Activated naive CD4-positive, alpha-beta T cell treated with anti-CD3 and anti-CD28 coated beads for 36 hours (primary cell): ENCODE measurements at regions of chr6 and their contacts with region 1.

Region 1: GRCh38 chr6:87393022-87393622 is 14.7 kb upstream of the CFAP206 start:
- DNase-seq: peak; percentile 56
- H3K4me3 Mint-ChIP-seq: no peak overlapping the region
- H3K27ac Mint-ChIP-seq: no peak overlapping the region
- H3K4me1 Mint-ChIP-seq: no peaks in the 10 kb centered on the region
- H3K27me3 Mint-ChIP-seq: peaks cover 2% of the 10 kb centered on the region

Region 2: GRCh38 chr6:87139236-87139635 is 253.9 kb before region 1 on chr6:
- CTCF ChIA-PET with region 1: interaction called, 12 read pairs
- intact Hi-C with region 1: loop called (anchors 1 kb)
- DNase-seq: peak; percentile 60
- H3K4me3 Mint-ChIP-seq: no peak overlapping the region
- H3K27ac Mint-ChIP-seq: no peak overlapping the region
- H3K4me1 Mint-ChIP-seq: peaks cover 2% of the 10 kb centered on the region
- H3K27me3 Mint-ChIP-seq: peaks cover 7% of the 10 kb centered on the region

Region 3: DNA sequence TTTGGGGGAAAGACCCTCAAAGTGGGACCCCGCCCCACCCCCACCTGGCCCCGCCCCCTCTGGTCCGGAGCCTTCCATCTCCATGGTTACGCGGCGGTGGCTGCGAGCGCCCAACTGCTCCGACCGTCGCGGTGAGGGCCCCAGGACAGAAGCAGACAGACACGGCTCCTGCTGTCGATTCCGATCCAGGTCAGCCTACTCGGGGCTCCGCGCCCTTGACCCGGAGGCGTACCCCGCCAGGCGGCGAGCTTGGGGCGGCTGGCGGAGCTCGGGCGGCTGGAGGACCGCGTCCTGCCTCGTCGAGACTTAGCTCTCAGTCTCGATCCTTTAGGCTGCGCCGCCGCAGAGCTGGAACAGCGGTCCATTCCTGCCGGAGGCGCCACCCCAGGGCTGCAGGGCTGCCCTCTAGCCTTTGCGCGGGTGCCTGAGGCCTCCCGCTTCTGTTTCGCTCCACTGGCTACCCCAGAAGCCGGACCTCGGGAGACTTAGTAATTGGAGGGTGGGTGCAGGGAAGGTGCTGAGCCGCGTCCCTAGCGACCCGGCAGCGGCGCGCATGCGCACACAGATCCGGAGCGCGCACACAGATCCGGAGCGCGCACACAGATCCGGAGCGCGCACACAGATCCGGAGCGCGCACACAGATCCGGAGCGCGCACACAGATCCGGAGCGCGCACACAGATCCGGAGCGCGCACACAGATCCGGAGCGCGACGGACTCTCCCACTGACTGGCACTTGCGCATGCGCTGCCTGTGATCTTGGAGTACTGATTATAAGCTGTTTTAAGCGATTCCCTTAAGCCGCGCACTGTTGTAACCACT is 15.0 kb after region 1 on chr6 and contains the start of gene CFAP206:
- CTCF ChIA-PET with region 1: interaction called, 12 read pairs
- intact Hi-C with region 1: no loop called
- DNase-seq: peak; percentile 81
- H3K4me3 Mint-ChIP-seq: peak within 1 kb of the TSS; percentile 84
- H3K27ac Mint-ChIP-seq: no peak within 1 kb of the TSS
- H3K4me1 Mint-ChIP-seq: no peaks in the 10 kb centered on the region
- H3K27me3 Mint-ChIP-seq: peaks cover 11% of the 10 kb centered on the region
- total RNA-seq, gene CFAP206: not detected

Region 4: GRCh38 chr6:87514831-87515230 is 121.7 kb after region 1 on chr6:
- CTCF ChIA-PET with region 1: no interaction called
- intact Hi-C with region 1: no loop called
- DNase-seq: no peak
- H3K4me3 Mint-ChIP-seq: no peak overlapping the region
- H3K27ac Mint-ChIP-seq: peak overlapping the region; percentile 46
- H3K4me1 Mint-ChIP-seq: peaks cover 6% of the 10 kb centered on the region
- H3K27me3 Mint-ChIP-seq: no peaks in the 10 kb centered on the region

Region 5: GRCh38 chr6:87799651-87800050 is 406.5 kb after region 1 on chr6:
- CTCF ChIA-PET with region 1: no interaction called
- intact Hi-C with region 1: loop called (anchors 10 kb)
- DNase-seq: no peak
- H3K4me3 Mint-ChIP-seq: no peak overlapping the region
- H3K27ac Mint-ChIP-seq: no peak overlapping the region
- H3K4me1 Mint-ChIP-seq: peaks cover 3% of the 10 kb centered on the region
- H3K27me3 Mint-ChIP-seq: peaks cover 7% of the 10 kb centered on the region

Region 6: GRCh38 chr6:87929843-87930288 is 536.7 kb after region 1 on chr6:
- CTCF ChIA-PET with region 1: no interaction called
- intact Hi-C with region 1: loop called (anchors 2 kb)
- DNase-seq: peak; percentile 76
- H3K4me3 Mint-ChIP-seq: no peak overlapping the region
- H3K27ac Mint-ChIP-seq: no peak overlapping the region
- H3K4me1 Mint-ChIP-seq: no peaks in the 10 kb centered on the region
- H3K27me3 Mint-ChIP-seq: no peaks in the 10 kb centered on the region

Region 7: DNA sequence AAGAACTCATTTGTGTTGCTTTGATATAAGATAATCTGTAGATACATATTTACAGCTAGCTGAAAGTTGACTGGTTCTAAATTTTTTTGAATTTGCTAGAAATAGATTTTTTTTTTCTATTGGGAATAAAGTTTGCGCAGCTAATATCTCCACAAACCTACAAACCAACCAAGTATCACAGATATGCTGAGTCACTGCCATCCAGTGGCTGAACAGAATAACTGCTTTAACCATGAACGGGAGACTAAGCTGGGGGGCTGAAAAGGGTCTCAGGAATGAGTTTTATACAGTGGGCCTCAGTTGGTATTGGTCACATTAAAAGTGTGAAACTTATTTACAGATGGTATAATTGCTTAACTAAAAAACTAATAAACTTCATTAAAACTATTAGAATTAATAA is 1099.7 kb after region 1 on chr6:
- CTCF ChIA-PET with region 1: no interaction called
- intact Hi-C with region 1: loop called (anchors 5 kb)
- DNase-seq: no peak
- H3K4me3 Mint-ChIP-seq: no peak overlapping the region
- H3K27ac Mint-ChIP-seq: no peak overlapping the region
- H3K4me1 Mint-ChIP-seq: no peaks in the 10 kb centered on the region
- H3K27me3 Mint-ChIP-seq: peaks cover 13% of the 10 kb centered on the region

Region 8: DNA sequence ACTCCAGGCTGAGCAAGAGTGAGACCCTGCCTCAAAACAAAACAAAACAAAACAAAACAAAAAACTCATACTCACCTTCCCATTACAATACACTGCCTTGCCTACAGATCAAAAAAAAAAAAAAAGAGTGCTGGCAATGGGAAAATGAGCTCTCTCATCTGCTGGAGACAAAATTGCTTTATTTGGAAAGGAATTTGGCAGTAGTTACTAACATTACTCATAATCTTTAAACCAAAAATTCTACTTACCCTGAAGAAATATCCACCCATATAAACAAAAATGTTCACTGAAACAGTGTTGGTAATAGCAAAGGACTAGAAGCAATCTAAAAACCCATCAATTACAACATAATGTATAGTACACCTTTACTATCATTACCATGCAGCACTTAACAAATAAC is 1449.9 kb after region 1 on chr6:
- CTCF ChIA-PET with region 1: no interaction called
- intact Hi-C with region 1: no loop called
- DNase-seq: no peak
- H3K4me3 Mint-ChIP-seq: no peak overlapping the region
- H3K27ac Mint-ChIP-seq: no peak overlapping the region
- H3K4me1 Mint-ChIP-seq: no peaks in the 10 kb centered on the region
- H3K27me3 Mint-ChIP-seq: no peaks in the 10 kb centered on the region

Region 9: GRCh38 chr6:88870717-88871330 is 1477.7 kb after region 1 on chr6:
- CTCF ChIA-PET with region 1: no interaction called
- intact Hi-C with region 1: loop called (anchors 2 kb)
- DNase-seq: peak; percentile 63
- H3K4me3 Mint-ChIP-seq: no peak overlapping the region
- H3K27ac Mint-ChIP-seq: no peak overlapping the region
- H3K4me1 Mint-ChIP-seq: peaks cover 33% of the 10 kb centered on the region
- H3K27me3 Mint-ChIP-seq: no peaks in the 10 kb centered on the region